ENCODE measurements at regions of chr10 and their contacts with region 1.

Region 1: DNA sequence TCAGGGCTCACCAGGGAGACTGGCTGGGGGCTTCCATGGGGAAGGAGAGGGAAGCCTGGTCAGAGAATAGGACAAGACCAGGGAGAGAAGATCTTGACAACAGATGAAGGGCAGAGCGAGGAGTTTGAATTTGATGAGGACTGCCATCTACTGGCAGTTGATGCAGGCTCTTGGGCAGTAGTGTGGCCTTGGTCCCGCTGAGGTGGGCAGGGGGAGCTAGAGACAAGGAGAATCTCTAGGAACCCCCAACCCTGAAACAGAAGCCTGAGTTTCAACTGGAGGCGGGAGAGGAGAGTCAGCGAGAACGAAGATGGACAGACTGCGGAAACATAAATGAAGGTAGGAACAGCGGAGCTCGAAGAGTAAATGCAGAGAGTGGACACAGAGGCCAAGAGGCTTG is 81.0 kb downstream of the PPP1R3C start:
- DNase-seq: peak; percentile 66 to 76
- H3K4me3 ChIP-seq: no peak overlapping the region; a peak in 1 of 8 replicates
- H3K27ac ChIP-seq: no peak overlapping the region
- H3K4me1 ChIP-seq: no peaks in the 10 kb centered on the region; a peak in 2 of 7 replicates
- H3K27me3 ChIP-seq: no peaks in the 10 kb centered on the region
- CTCF ChIP-seq: peak; percentile 91 to 99 (median 98)
- EP300 ChIP-seq: no peak
- POLR2A ChIP-seq: no peak
- RAD21 ChIP-seq: peak; percentile 89 to 91

Region 2: GRCh38 chr10:91381257-91381891 is 170.5 kb before region 1 on chr10:
- CTCF ChIA-PET with region 1: interaction called, 11 read pairs
- POLR2A ChIA-PET with region 1: no interaction called
- DNase-seq: no peak
- H3K4me3 ChIP-seq: no peak overlapping the region
- H3K27ac ChIP-seq: no peak overlapping the region
- H3K4me1 ChIP-seq: no peaks in the 10 kb centered on the region
- H3K27me3 ChIP-seq: no peaks in the 10 kb centered on the region
- CTCF ChIP-seq: no peak
- EP300 ChIP-seq: no peak
- POLR2A ChIP-seq: no peak
- RAD21 ChIP-seq: no peak

Region 3: DNA sequence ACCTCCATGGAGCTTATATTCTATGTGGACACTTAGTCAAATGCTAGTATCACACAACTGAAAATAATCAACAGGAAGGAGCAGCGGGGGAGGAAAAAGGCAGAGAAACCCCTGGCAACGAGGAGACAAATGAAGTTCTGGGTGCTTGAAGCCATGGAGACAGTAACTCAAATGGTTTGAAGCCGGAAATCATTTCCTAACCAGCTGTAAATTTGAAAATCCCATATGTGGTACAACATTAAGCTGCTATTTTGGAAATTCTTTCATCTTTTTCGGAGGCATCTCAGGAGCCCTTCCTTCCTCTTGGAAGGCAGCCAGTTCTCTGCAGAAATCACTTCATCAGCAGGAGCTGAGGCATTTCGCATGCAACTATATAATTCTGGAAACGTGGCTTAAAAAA is 10.4 kb before region 1 on chr10:
- CTCF ChIA-PET with region 1: interaction called, 29 read pairs
- POLR2A ChIA-PET with region 1: no interaction called
- DNase-seq: no peak
- H3K4me3 ChIP-seq: no peak overlapping the region
- H3K27ac ChIP-seq: no peak overlapping the region
- H3K4me1 ChIP-seq: no peaks in the 10 kb centered on the region
- H3K27me3 ChIP-seq: no peaks in the 10 kb centered on the region
- CTCF ChIP-seq: no peak
- EP300 ChIP-seq: no peak
- POLR2A ChIP-seq: no peak
- RAD21 ChIP-seq: no peak

Region 4: GRCh38 chr10:91604553-91605534 is 53.0 kb after region 1 on chr10:
- CTCF ChIA-PET with region 1: interaction called, 19 read pairs
- POLR2A ChIA-PET with region 1: no interaction called
- DNase-seq: no peak
- H3K4me3 ChIP-seq: no peak overlapping the region
- H3K27ac ChIP-seq: no peak overlapping the region
- H3K4me1 ChIP-seq: peaks cover 0 to 2% (median 0%) of the 10 kb centered on the region in 4 experiments; a peak in 1 of 7 replicates
- H3K27me3 ChIP-seq: no peaks in the 10 kb centered on the region; a peak in 1 of 7 replicates
- CTCF ChIP-seq: peak in 1 of 3 experiments; percentile 42; a peak in 1 of 4 replicates
- EP300 ChIP-seq: no peak
- POLR2A ChIP-seq: no peak
- RAD21 ChIP-seq: no peak

Measured in H1 (cell line).